Common myeloid progenitor, CD34-positive (primary cell): ENCODE measurements at regions of chr12 and their contacts with region 1.

Region 1: DNA sequence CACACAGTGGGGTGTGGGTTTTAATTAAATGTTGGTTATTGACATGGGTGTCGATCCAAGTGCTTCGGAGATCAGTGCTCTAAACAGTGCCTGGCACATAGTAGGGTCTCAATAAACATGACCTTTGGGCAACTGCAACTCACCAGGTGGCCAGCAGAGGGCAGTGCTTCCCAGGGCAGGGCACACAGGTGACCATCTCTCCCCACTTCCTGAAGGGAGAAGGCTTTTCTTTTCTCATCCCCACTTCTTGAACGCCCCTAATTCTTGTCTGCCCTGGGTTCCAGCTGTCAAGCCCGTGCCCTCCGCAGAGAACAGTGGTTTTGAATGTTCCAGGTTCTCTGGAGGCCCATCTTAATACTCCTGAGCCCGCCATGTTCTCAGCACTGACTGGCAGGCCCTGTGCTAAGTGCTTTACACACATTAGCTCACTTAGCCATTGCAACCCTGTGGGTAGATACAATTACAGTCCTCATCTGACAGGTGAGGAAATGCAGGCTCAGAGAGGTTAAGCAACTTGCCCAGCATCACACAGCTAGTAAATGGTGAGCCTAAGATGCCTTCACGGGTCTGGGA is 16.3 kb downstream of the RAPGEF3 start:
- DNase-seq: peak; percentile 41 to 47 (median 42)
- H3K4me3 ChIP-seq: no peak overlapping the region
- H3K27ac ChIP-seq: no peak overlapping the region
- H3K4me1 ChIP-seq: peaks cover 4 to 32% (median 21%) of the 10 kb centered on the region in 4 experiments
- H3K27me3 ChIP-seq: no peaks in the 10 kb centered on the region

Region 2: GRCh38 chr12:47705566-47706425 is 36.5 kb before region 1 on chr12 and contains the start of gene RPAP3:
- CTCF ChIA-PET with region 1: interaction called, 27 read pairs
- POLR2A ChIA-PET with region 1: no interaction called
- DNase-seq: peak; percentile 95 to 98 (median 98)
- H3K4me3 ChIP-seq: peak within 1 kb of the TSS; percentile 55 to 88 (median 80)
- H3K27ac ChIP-seq: peak within 1 kb of the TSS; percentile 77 to 91
- H3K4me1 ChIP-seq: peaks cover 36 to 56% (median 47%) of the 10 kb centered on the region in 4 experiments
- H3K27me3 ChIP-seq: no peaks in the 10 kb centered on the region

Region 3: DNA sequence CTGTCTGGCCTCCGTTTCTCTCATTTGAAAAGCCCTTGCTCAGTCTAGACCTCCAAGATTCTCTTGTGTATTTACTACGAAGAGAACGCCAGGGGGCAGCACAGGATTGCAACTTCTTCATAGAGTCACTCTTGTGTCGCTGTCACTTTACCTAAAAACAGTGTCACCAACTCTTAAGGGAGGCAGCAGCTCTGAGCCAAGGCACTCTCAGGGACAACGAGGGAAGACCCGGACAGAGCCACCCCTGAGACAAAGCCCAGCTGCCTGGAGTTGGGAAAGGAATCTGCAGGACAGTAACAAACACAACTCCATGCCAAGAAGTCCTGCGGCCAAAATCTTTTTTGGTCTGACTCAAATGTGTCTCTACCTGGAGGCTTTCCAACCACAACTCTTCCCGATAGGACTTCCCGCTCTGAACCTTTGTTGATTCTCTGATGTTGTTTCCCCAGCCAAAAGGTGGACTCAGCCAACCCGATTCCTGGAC is 26.9 kb before region 1 on chr12:
- CTCF ChIA-PET with region 1: interaction called, 184 read pairs
- POLR2A ChIA-PET with region 1: no interaction called
- DNase-seq: peak; percentile 84 to 93 (median 89)
- H3K4me3 ChIP-seq: no peak overlapping the region
- H3K27ac ChIP-seq: no peak overlapping the region
- H3K4me1 ChIP-seq: peaks cover 4 to 33% (median 23%) of the 10 kb centered on the region in 4 experiments
- H3K27me3 ChIP-seq: no peaks in the 10 kb centered on the region

Region 4: DNA sequence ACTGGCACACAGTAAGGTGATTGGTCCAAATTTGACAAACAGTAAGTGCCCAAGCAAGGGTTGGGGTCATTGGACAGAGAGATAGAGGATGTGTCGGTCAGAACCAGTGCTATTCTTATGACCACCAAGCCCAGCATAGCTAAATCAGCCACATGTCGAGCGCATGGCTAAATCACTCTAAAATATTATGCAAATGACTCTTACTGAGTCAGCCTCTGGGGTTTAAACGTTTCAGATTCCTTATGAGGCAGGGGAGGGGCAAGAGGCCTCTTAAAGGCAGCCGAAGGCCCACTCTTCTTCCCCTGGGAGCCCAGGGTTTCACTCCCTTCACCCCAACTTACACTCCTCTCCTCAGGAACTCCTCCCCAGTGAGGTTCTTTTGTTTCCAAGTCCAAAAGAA is 16.4 kb before region 1 on chr12:
- CTCF ChIA-PET with region 1: interaction called, 84 read pairs
- POLR2A ChIA-PET with region 1: interaction called, 3 read pairs
- DNase-seq: no peak
- H3K4me3 ChIP-seq: no peak overlapping the region
- H3K27ac ChIP-seq: no peak overlapping the region
- H3K4me1 ChIP-seq: peaks cover 0 to 12% (median 8%) of the 10 kb centered on the region in 4 experiments
- H3K27me3 ChIP-seq: peaks cover 0 to under 1% (median 0%) of the 10 kb centered on the region in 5 experiments

Region 5: GRCh38 chr12:47758834-47759690 is 16.7 kb after region 1 on chr12 and contains the start of gene RAPGEF3:
- CTCF ChIA-PET with region 1: interaction called, 354 read pairs
- POLR2A ChIA-PET with region 1: interaction called, 3 read pairs
- DNase-seq: peak; percentile 79 to 84 (median 82)
- H3K4me3 ChIP-seq: peak within 1 kb of the TSS; percentile 25 to 90 (median 69)
- H3K27ac ChIP-seq: peak within 1 kb of the TSS; percentile 50 to 84
- H3K4me1 ChIP-seq: peaks cover 0 to 53% (median 36%) of the 10 kb centered on the region in 4 experiments
- H3K27me3 ChIP-seq: no peaks in the 10 kb centered on the region

Region 6: GRCh38 chr12:47797441-47797840 is 55.1 kb after region 1 on chr12:
- CTCF ChIA-PET with region 1: interaction called, 1,109 read pairs
- POLR2A ChIA-PET with region 1: no interaction called
- DNase-seq: peak in 2 of 3 donors; percentile 48 to 59
- H3K4me3 ChIP-seq: no peak overlapping the region
- H3K27ac ChIP-seq: no peak overlapping the region
- H3K4me1 ChIP-seq: peaks cover 10 to 50% (median 40%) of the 10 kb centered on the region in 4 experiments
- H3K27me3 ChIP-seq: no peaks in the 10 kb centered on the region

Region 7: GRCh38 chr12:47819896-47820630 is 77.7 kb after region 1 on chr12 and contains the start of gene HDAC7:
- CTCF ChIA-PET with region 1: interaction called, 11 read pairs
- POLR2A ChIA-PET with region 1: no interaction called
- DNase-seq: peak; percentile 61 to 84 (median 71)
- H3K4me3 ChIP-seq: peak within 1 kb of the TSS; percentile 60 to 94 (median 79)
- H3K27ac ChIP-seq: peak within 1 kb of the TSS; percentile 64 to 86
- H3K4me1 ChIP-seq: peaks cover 11 to 73% (median 65%) of the 10 kb centered on the region in 4 experiments
- H3K27me3 ChIP-seq: no peaks in the 10 kb centered on the region

Region 8: DNA sequence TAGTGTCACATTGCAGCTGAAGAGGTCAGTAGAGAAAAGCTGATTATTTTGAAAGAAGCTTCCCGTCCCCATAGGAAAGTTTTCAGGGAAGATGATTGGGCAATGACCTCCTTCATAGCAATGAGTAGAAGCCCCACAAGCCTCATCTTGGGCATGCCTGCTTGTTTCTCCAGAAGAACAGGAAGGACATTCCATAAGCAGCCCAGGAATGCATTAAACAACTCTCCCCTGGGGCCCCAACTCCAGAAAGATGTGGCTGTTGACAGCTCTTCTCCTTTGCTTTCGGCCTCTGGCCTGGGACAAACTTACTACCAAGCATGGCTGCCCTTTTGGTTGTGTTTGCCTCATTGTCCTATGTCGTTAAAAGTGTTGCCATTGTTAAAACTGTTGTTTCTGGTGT is 168.1 kb after region 1 on chr12:
- CTCF ChIA-PET with region 1: no interaction called
- POLR2A ChIA-PET with region 1: no interaction called
- DNase-seq: no peak
- H3K4me3 ChIP-seq: no peak overlapping the region
- H3K27ac ChIP-seq: no peak overlapping the region
- H3K4me1 ChIP-seq: peaks cover 0 to 2% (median 2%) of the 10 kb centered on the region in 4 experiments
- H3K27me3 ChIP-seq: peaks cover 6 to 22% (median 16%) of the 10 kb centered on the region in 5 experiments